CD14-positive monocyte (primary cell): ENCODE measurements at regions of chr20 and their contacts with region 1.

Region 1: DNA sequence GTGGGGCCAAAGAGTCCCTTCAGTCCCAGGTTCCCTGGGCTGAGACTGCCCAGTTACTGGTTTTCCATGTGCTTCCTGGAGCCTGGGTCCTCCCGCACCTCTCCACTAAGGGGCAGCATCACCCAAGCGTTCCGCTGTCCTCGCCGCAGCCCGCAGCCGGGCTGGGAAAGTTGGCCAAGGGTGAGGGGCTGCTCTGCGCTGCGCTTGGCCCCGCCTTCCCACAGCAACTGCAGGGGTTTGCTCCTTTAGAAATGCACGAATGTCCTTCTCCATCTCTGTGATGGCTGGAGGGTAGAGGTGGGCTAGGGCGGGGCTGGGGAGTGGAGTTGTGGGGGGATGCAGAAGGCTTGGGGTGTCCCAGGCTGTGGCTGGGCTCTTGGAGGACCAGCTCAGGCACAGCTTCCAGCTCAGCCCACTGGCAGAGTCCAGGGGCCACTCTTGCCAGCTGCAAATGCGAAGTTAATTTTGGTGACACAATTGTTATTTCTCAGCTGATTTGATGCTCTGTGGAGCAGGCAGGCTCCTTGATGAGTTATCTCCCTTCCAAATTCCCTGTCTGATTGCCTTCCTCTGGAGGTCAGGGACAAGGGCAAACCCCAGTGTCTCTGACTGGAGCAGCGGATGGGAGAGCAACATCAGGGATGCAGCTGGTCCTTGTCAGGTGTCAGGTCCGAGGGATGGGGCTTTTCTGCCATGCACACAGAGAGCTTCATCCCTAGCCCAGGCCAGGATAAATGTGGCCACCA is 63.2 kb downstream of the NOL4L start:
- DNase-seq: peak; percentile 49 to 67 (median 56)
- H3K4me3 ChIP-seq: no peak overlapping the region
- H3K4me3 Mint-ChIP-seq: no peak overlapping the region
- H3K27ac ChIP-seq: no peak overlapping the region
- H3K27ac Mint-ChIP-seq: no peak overlapping the region
- H3K4me1 ChIP-seq: peaks cover 19 to 33% of the 10 kb centered on the region in 2 donors
- H3K4me1 Mint-ChIP-seq: peaks cover 33% of the 10 kb centered on the region
- H3K27me3 ChIP-seq: no peaks in the 10 kb centered on the region
- H3K27me3 Mint-ChIP-seq: peaks cover 0 to 4% (median 0%) of the 10 kb centered on the region in 3 donors
- CTCF ChIP-seq: peak; percentile 87

Region 2: GRCh38 chr20:32456869-32457478 is 65.0 kb before region 1 on chr20:
- intact Hi-C with region 1: no loop called
- DNase-seq: no peak
- H3K4me3 ChIP-seq: peak overlapping the region in 1 of 3 experiments; percentile 25
- H3K4me3 Mint-ChIP-seq: no peak overlapping the region
- H3K27ac ChIP-seq: no peak overlapping the region
- H3K27ac Mint-ChIP-seq: no peak overlapping the region
- H3K4me1 ChIP-seq: peaks cover 10 to 17% of the 10 kb centered on the region in 2 donors
- H3K4me1 Mint-ChIP-seq: peaks cover 12% of the 10 kb centered on the region
- H3K27me3 ChIP-seq: no peaks in the 10 kb centered on the region
- H3K27me3 Mint-ChIP-seq: peaks cover 0 to 2% (median 0%) of the 10 kb centered on the region in 3 donors
- CTCF ChIP-seq: peak; percentile 82

Region 3: GRCh38 chr20:32470025-32470861 is 51.7 kb before region 1 on chr20:
- intact Hi-C with region 1: no loop called
- DNase-seq: peak in 2 of 3 donors; percentile 51 to 56
- H3K4me3 ChIP-seq: peak overlapping the region in 1 of 3 experiments; percentile 12
- H3K4me3 Mint-ChIP-seq: no peak overlapping the region
- H3K27ac ChIP-seq: peak overlapping the region in 1 of 2 donors; percentile 8
- H3K27ac Mint-ChIP-seq: peak overlapping the region in 2 of 7 donors; percentile 6 to 30
- H3K4me1 ChIP-seq: peaks cover 28 to 37% of the 10 kb centered on the region in 2 donors
- H3K4me1 Mint-ChIP-seq: peaks cover 41% of the 10 kb centered on the region
- H3K27me3 ChIP-seq: no peaks in the 10 kb centered on the region
- H3K27me3 Mint-ChIP-seq: peaks cover 1 to 2% (median 1%) of the 10 kb centered on the region in 3 donors
- CTCF ChIP-seq: peak; percentile 81

Region 4: DNA sequence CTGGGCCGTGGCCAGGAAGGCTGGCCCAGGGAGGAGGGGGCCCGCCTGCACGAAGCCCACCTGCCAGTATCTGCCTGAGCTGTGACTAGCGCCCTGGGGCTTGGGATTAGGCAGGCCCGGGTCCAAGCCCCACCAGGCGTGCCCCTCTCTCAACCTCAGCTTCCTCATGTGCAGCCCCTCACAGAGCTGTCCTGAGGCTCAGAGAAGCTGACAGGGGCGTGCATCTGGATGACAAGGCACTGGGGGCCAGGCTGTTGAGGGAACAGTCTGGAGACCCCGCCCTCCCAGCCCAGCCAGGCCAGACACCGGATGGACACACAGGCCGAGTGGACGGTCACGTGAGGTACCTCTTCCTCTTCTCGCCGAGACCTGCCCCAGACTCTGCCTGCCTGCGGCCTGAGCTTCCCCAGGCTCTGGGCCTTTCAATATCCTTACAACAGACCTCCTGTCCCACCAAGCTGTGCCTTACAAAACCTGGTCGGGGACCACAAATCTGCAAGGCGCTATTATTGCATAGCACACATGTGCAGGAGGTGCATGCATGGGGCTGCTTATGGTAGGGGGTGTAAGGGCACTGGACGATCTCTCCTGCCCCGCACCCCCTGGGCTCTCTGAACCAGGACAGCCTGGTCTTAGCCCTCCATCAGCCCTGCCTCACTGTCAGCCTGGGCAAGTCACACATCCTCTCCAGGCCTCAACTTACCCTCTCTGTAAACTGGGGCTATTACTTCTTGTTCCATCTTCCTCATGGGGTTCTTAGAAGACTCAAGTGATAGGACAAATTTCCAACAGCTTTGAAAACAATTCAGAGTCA is 43.2 kb after region 1 on chr20:
- intact Hi-C with region 1: loop called in 1 of 2 experiments (anchors 5 kb)
- DNase-seq: peak; percentile 83 to 92 (median 86)
- H3K4me3 ChIP-seq: peak overlapping the region in 1 of 3 experiments; percentile 61
- H3K4me3 Mint-ChIP-seq: peak overlapping the region; percentile 39 to 68
- H3K27ac ChIP-seq: peak overlapping the region; percentile 39 to 75
- H3K27ac Mint-ChIP-seq: peak overlapping the region; percentile 65 to 88 (median 80)
- H3K4me1 ChIP-seq: peaks cover 29 to 46% of the 10 kb centered on the region in 2 donors
- H3K4me1 Mint-ChIP-seq: peaks cover 38% of the 10 kb centered on the region
- H3K27me3 ChIP-seq: no peaks in the 10 kb centered on the region
- H3K27me3 Mint-ChIP-seq: peaks cover 3 to 10% (median 7%) of the 10 kb centered on the region in 3 donors
- CTCF ChIP-seq: no peak

Region 5: DNA sequence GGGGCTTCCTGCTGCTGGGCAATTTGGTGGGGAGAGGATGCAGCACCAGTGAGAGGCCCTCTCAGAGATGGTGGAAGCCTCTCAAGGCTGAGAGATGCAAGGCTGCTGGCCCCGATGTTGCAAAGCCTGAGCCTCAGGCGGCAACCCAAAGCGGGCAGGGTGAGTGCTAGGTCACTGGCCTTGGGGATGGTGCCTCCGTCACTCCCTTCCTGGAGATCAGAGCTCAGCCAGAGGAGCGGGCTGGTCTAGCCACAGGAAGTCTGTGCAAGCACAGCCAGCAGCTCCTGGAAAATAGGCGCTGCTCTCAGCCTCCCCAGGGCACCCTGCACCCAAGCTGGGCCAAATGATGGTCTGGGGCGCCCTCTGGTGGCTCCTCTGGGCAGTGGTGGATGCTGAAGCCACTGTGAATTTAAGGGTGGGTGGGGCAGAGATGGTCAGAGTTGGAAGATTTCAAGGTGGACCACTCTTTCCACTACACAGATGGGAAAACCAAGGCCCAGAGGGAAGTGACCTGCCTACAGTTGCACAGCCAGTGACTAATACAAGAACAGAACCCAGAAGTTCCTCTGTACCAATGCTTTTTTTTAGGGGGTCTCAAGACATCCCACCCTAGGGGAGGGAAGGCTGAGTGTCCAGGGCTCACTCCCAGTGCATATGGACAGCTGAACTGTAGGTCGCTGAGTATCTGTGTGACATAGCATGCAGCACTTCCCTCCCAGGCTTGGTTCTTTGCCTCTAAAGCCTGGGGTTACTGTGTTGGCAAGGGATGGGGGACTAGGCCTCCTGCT is 131.0 kb after region 1 on chr20:
- intact Hi-C with region 1: loop called (anchors 1 kb)
- DNase-seq: peak; percentile 74 to 80 (median 77)
- H3K4me3 ChIP-seq: no peak overlapping the region
- H3K4me3 Mint-ChIP-seq: peak overlapping the region; percentile 11 to 16
- H3K27ac ChIP-seq: no peak overlapping the region
- H3K27ac Mint-ChIP-seq: peak overlapping the region in 1 of 7 donors; percentile 11
- H3K4me1 ChIP-seq: peaks cover 32 to 47% of the 10 kb centered on the region in 2 donors
- H3K4me1 Mint-ChIP-seq: peaks cover 50% of the 10 kb centered on the region
- H3K27me3 ChIP-seq: no peaks in the 10 kb centered on the region
- H3K27me3 Mint-ChIP-seq: peaks cover 0 to 5% (median 4%) of the 10 kb centered on the region in 3 donors
- CTCF ChIP-seq: peak; percentile 93

Region 6: DNA sequence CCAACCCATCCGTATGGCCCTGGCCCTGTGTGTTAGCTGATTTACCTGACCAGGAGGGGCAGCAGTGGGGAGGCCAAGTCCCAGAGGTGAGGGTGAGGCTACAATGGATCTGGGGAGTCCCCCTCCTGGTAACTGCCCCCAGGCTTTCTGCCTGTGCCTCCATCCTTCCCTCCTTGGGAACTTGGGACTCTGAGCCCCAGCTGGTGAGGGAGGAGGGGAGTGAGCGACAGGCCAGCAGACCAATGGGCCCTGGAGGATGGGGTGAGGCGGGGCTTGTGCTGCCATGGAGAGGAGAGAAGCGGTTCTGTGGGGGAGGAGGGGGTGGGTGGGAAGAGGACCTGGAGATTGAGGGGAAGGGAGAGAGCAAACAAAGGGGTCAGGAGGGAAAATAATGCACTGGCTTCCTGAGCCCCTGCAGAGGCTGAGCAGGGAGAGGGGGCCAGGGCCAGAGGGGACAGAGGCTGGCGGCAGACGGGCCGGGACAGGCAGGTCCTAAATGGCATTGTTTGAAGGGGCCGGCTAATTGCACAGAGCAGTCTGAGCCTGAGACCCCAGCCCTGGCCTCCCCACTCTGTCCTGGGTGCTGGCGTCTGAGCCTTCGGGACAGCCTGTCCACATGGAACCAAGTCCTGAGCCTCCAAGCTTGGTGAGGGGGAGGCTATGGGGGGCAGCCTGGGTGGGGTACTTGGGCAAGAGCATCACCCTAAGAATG is 257.7 kb after region 1 on chr20:
- intact Hi-C with region 1: loop called in 1 of 2 experiments (anchors 5 kb)
- DNase-seq: no peak
- H3K4me3 ChIP-seq: no peak overlapping the region
- H3K4me3 Mint-ChIP-seq: no peak overlapping the region
- H3K27ac ChIP-seq: no peak overlapping the region
- H3K27ac Mint-ChIP-seq: no peak overlapping the region
- H3K4me1 ChIP-seq: no peaks in the 10 kb centered on the region
- H3K4me1 Mint-ChIP-seq: peaks cover 6% of the 10 kb centered on the region
- H3K27me3 ChIP-seq: no peaks in the 10 kb centered on the region
- H3K27me3 Mint-ChIP-seq: peaks cover 0 to 2% (median 0%) of the 10 kb centered on the region in 3 donors
- CTCF ChIP-seq: no peak